ENCODE measurements at regions of chr17 and their contacts with region 1.

Region 1: DNA sequence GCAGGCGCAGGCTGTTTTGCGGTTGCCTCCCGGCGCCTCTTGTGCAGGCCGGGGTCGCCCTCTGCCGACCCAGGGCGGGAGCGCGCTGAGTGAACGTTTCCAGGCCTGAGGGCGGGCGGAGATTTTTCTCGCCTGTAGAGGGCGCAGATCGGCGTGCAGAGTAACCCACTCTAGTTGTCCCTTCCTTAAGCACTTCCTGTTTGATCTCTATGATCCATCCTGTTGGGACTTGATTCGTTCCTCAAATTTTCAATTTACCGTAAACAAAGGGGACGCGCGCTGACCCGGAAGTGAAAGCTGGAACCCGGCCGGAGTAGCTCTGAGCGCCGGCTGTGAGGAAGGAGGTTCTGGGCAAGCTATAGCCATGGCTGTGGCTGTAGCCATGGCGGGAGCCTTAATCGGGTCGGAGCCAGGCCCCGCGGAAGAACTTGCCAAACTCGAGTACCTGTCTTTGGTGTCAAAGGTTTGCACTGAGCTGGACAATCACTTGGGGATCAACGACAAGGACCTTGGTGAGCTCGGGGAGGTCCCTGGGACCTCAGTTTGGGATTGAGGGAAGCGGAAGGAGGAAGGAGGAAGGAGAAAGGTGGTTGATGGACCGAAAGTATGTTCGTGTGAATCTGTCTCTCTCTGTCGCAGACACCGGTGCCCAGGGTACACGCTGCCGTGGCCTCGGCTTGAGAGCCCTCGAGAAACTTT is at the start of gene DHX8:
- DNase-seq: peak; percentile 96 to 100 (median 99)
- ATAC-seq: peak; percentile 99
- H3K4me3 ChIP-seq: peak within 1 kb of the TSS; percentile 90
- H3K4me3 Mint-ChIP-seq: peak within 1 kb of the TSS; percentile 98 to 100 (median 100)
- H3K27ac ChIP-seq: peak within 1 kb of the TSS; percentile 87
- H3K27ac Mint-ChIP-seq: peak within 1 kb of the TSS; percentile 91 to 100 (median 98)
- H3K4me1 ChIP-seq: peaks cover 21 to 29% of the 10 kb centered on the region in 2 donors
- H3K4me1 Mint-ChIP-seq: peaks cover 19 to 52% (median 36%) of the 10 kb centered on the region in 7 donors
- H3K27me3 ChIP-seq: no peaks in the 10 kb centered on the region
- H3K27me3 Mint-ChIP-seq: no peaks in the 10 kb centered on the region
- total RNA-seq, gene DHX8: 67.7 to 93.4 (median 77.8) TPM

Region 2: DNA sequence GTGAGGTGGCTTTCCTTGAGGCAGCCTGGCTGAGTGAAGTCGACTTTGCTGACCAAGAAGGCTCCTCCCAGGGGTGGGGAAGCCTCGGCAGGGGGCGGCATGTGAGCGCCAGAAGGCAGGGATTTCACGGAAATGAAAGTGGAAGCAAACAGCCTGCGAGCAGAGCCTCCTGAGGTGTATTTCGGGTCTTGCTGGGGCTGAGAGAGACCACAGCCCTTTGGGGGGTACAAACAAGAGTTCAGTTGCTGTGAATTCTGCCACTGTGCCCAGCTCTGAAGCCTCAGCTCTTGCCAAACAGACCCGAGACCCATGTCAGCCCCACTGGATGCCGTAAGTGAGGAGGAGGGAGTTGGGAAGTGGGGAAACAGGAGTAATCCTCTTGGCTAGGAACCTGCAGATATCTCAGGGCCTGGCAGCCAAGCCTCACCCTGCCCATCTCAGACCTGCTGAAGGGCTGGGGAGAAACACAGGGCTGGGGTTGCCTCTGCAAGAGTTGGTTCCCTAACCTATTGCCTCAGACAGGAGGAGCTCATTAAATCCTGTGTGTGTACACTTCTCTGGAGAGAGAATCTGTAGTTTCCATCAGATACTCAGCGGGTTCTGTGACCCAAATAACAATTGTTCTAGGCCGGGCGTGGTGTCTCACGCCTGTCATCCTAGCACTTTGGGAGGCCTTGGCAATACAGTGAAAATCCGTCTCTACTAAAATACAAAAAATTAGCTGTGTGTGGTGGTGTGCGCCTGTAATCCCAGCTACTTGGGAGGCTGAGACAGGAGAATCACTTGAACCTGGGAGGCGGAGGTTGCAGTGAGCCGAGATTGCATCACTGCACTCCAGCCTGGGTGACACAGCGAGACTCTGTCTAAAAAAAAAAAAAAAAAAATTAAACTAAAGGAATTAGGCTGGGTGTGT is 476.9 kb before region 1 on chr17 and contains the start of gene IFI35:
- CTCF ChIA-PET with region 1: no interaction called
- POLR2A ChIA-PET with region 1: no interaction called
- intact Hi-C with region 1: loop called in 1 of 2 experiments (anchors 1 kb)
- DNase-seq: peak; percentile 63 to 85 (median 82)
- ATAC-seq: peak; percentile 99
- H3K4me3 ChIP-seq: peak within 1 kb of the TSS; percentile 97
- H3K4me3 Mint-ChIP-seq: peak within 1 kb of the TSS; percentile 86 to 100 (median 100)
- H3K27ac ChIP-seq: peak within 1 kb of the TSS; percentile 99
- H3K27ac Mint-ChIP-seq: peak within 1 kb of the TSS; percentile 94 to 100 (median 100)
- H3K4me1 ChIP-seq: no peaks in the 10 kb centered on the region
- H3K4me1 Mint-ChIP-seq: peaks cover 6 to 25% (median 24%) of the 10 kb centered on the region in 7 donors
- H3K27me3 ChIP-seq: no peaks in the 10 kb centered on the region
- H3K27me3 Mint-ChIP-seq: no peaks in the 10 kb centered on the region
- total RNA-seq, gene IFI35: 23.5 to 145 (median 32.1) TPM

Region 3: DNA sequence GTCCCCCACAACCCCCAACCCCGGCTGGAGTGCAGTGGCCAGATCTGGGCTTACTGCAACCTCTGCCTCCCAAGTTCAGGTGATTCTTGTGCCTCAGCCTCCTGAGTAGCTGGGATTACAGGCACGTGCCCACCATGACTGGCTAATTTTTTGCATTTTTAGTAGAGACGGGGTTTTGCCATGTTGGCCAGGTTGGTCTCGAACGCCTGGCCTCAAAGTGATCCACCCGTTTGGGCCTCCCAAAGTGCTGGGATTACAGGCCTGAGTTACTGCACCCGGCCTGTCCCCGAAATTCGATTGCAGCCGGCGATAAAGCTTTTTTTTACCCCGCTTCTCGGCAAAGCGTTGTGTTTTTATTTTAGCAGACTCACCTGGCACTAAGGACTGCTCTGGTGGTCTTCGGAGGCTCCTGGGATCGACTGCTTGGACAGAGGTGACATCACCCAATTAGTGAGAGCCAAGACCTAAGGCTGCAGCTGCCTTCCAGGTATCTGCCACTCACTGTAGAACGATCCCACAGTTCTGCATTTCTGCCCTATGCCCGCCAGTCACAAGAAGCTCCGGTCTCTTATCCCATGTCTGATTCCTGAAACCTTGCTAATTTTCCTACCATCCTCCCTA is 167.2 kb before region 1 on chr17:
- CTCF ChIA-PET with region 1: interaction called, 3 read pairs
- POLR2A ChIA-PET with region 1: interaction called, 8 read pairs
- intact Hi-C with region 1: loop called in 1 of 2 experiments (anchors 1 kb)
- DNase-seq: peak in 2 of 9 donors; percentile 13 to 36
- ATAC-seq: no peak
- H3K4me3 ChIP-seq: no peak overlapping the region
- H3K4me3 Mint-ChIP-seq: peak overlapping the region in 5 of 10 donors; percentile 16 to 42 (median 25)
- H3K27ac ChIP-seq: no peak overlapping the region
- H3K27ac Mint-ChIP-seq: peak overlapping the region in 7 of 9 donors; percentile 38 to 79 (median 63)
- H3K4me1 ChIP-seq: no peaks in the 10 kb centered on the region
- H3K4me1 Mint-ChIP-seq: peaks cover 5 to 11% (median 7%) of the 10 kb centered on the region in 7 donors
- H3K27me3 ChIP-seq: no peaks in the 10 kb centered on the region
- H3K27me3 Mint-ChIP-seq: no peaks in the 10 kb centered on the region

Region 4: DNA sequence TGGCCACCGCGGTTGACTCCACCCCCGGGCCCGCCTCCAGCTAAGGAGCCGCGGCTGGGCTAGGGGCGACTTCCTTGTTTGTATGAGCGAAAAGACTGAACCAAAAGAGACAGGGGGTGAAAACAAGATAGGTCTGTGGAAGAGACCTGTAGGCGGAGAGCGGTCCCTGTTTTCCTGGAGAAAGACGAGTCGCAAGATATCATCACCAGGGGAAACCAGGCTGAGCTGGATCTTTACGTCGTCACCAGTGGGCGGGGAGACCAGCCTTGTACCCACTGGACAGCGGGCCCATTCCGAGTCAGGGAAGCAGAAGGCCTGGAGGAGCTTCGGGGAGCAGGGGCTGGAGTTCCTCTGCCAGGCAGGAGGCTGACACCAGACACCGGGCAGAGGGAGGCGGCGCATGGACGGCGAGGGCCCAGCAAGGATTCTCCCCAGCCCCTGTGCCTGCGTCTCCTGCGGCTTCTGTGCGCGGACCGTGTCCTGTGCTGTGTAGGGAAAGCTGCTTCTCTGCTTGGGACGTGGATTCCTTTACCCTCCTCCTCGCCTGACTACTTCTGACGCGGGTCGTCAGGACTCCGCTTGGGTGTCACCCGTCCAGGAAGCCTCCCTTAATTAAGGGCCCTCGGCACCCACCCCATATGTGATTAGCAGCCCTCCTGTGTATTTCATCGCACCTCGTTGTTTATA is 95.3 kb before region 1 on chr17:
- CTCF ChIA-PET with region 1: interaction called, 85 read pairs
- POLR2A ChIA-PET with region 1: interaction called, 65 read pairs
- intact Hi-C with region 1: loop called (anchors 1 kb)
- DNase-seq: peak; percentile 92 to 98 (median 95)
- ATAC-seq: peak; percentile 84
- H3K4me3 ChIP-seq: peak overlapping the region; percentile 94
- H3K4me3 Mint-ChIP-seq: peak overlapping the region; percentile 91 to 99 (median 96)
- H3K27ac ChIP-seq: peak overlapping the region; percentile 95
- H3K27ac Mint-ChIP-seq: peak overlapping the region; percentile 95 to 100 (median 98)
- H3K4me1 ChIP-seq: peaks cover 4 to 15% of the 10 kb centered on the region in 2 donors
- H3K4me1 Mint-ChIP-seq: peaks cover 16 to 39% (median 31%) of the 10 kb centered on the region in 7 donors
- H3K27me3 ChIP-seq: no peaks in the 10 kb centered on the region
- H3K27me3 Mint-ChIP-seq: no peaks in the 10 kb centered on the region

Region 5: DNA sequence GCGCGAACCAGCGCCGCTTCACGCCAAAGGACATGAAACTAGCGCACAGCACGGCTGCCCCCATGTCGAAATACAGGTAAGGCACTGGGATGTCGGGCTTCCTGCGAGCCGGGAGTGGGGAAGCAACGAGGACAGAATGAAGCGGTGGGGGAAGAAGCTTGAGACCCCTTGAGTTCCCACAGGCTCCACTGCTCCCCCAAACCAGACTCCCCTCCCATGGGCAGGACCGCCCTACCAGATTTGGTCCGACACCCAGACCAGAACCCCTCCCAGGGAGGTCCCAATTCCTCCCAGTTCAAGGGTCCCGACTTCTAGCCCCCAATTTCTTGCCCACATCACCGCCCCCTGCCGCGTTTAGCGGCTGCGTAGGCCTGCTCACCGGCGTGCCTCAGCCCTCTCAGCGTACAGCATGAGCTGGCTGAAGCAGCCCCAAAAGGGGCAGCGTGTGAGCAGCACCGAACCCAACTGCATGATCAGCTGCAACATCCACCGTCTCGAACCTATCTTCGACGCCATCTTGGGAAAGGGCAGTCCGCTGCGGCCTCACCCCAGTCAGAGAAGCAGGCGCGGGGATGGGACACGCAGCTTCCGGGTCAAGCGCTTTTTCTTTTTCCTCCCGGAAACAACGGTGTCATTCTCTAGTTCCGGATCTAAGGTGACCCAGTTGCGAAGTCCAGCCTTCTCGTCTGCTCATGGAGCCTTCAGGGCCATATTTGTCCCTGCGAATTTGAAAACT is 530.8 kb after region 1 on chr17 and contains the start of gene TMEM101:
- CTCF ChIA-PET with region 1: no interaction called
- POLR2A ChIA-PET with region 1: no interaction called
- intact Hi-C with region 1: loop called (anchors 10 kb)
- DNase-seq: peak; percentile 63 to 90 (median 82)
- ATAC-seq: peak; percentile 99
- H3K4me3 ChIP-seq: peak within 1 kb of the TSS; percentile 96
- H3K4me3 Mint-ChIP-seq: peak within 1 kb of the TSS; percentile 93 to 100 (median 98)
- H3K27ac ChIP-seq: peak within 1 kb of the TSS; percentile 73
- H3K27ac Mint-ChIP-seq: peak within 1 kb of the TSS; percentile 84 to 99 (median 95)
- H3K4me1 ChIP-seq: peaks cover 8 to 9% of the 10 kb centered on the region in 2 donors
- H3K4me1 Mint-ChIP-seq: peaks cover 7 to 23% (median 11%) of the 10 kb centered on the region in 7 donors
- H3K27me3 ChIP-seq: no peaks in the 10 kb centered on the region
- H3K27me3 Mint-ChIP-seq: peaks cover 0 to under 1% (median 0%) of the 10 kb centered on the region in 5 donors
- total RNA-seq, gene TMEM101: 12.1 to 32.0 (median 30.5) TPM